CD4-positive, alpha-beta T cell (primary cell): ENCODE measurements at regions of chr10 and their contacts with region 1.

Region 1: GRCh38 chr10:89307269-89307577 is 5.4 kb downstream of the IFIT2 start:
- DNase-seq: no peak
- ATAC-seq: no peak
- H3K4me3 ChIP-seq: no peak overlapping the region
- H3K4me3 Mint-ChIP-seq: no peak overlapping the region
- H3K27ac ChIP-seq: no peak overlapping the region
- H3K27ac Mint-ChIP-seq: no peak overlapping the region
- H3K4me1 ChIP-seq: peaks cover 15% of the 10 kb centered on the region
- H3K4me1 Mint-ChIP-seq: peaks cover 25% of the 10 kb centered on the region
- H3K27me3 ChIP-seq: no peaks in the 10 kb centered on the region
- H3K27me3 Mint-ChIP-seq: no peaks in the 10 kb centered on the region
- CTCF ChIP-seq: no peak

Region 2: DNA sequence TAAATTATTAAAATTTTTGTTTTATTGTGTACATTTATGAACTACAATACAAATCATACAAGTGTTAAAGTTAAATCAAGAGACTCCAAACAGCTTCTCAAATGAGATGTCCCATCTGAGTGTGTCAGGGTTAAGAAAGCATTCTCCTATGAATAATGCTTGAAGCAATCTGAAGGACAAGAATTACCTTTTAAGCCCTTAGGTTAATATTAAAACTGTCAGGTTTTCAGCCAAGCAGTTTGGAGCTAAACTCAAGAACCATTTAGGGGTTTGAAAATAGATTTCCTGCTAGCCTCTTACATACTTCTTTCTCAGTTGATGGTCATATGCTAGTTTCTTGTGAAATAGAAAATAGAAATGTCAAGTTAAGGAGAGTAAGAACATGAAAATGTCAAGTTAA is 682.4 kb before region 1 on chr10:
- CTCF ChIA-PET with region 1: no interaction called
- POLR2A ChIA-PET with region 1: no interaction called
- intact Hi-C with region 1: no loop called
- DNase-seq: no peak
- ATAC-seq: no peak
- H3K4me3 ChIP-seq: no peak overlapping the region
- H3K4me3 Mint-ChIP-seq: no peak overlapping the region
- H3K27ac ChIP-seq: no peak overlapping the region
- H3K27ac Mint-ChIP-seq: no peak overlapping the region
- H3K4me1 ChIP-seq: no peaks in the 10 kb centered on the region
- H3K4me1 Mint-ChIP-seq: no peaks in the 10 kb centered on the region
- H3K27me3 ChIP-seq: no peaks in the 10 kb centered on the region
- H3K27me3 Mint-ChIP-seq: no peaks in the 10 kb centered on the region
- CTCF ChIP-seq: no peak

Region 3: DNA sequence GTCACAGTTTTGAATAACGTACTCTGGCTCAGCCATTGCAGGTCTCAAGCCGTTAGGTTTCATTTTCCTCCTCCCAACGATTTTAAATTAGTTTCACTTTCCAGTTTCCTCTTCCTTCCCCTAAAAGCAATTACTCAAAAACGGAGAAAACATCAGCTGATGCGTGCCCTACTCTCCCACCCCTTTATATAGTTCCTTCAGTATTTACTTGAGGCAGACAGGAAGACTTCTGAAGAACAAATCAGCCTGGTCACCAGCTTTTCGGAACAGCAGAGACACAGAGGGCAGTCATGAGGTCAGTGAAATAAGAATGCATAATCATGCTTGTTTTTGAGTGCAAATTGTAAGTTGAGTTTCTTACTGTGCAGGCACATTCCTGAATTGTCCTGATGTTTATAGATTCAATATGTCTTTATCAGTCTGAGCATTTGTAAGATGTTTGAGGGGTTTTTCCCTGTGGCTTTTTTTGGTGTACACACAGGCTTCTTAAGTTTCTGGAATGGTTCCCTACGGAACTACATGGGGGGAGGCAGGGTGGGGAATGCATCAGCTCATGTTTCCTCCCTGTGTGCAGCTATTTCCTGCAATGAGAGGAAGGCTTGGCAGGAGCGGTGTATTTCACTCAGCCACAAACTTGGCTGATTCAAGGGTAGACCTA is 20.7 kb after region 1 on chr10 and contains the start of gene IFIT3:
- CTCF ChIA-PET with region 1: no interaction called
- POLR2A ChIA-PET with region 1: interaction called, 25 read pairs
- intact Hi-C with region 1: loop called in 1 of 2 experiments (anchors 2 kb)
- DNase-seq: peak in 5 of 14 experiments; percentile 28 to 69 (median 62)
- ATAC-seq: peak; percentile 43
- H3K4me3 ChIP-seq: peak within 1 kb of the TSS; percentile 62
- H3K4me3 Mint-ChIP-seq: peak within 1 kb of the TSS; percentile 86
- H3K27ac ChIP-seq: peak within 1 kb of the TSS; percentile 30 to 32
- H3K27ac Mint-ChIP-seq: peak within 1 kb of the TSS; percentile 63
- H3K4me1 ChIP-seq: peaks cover 45% of the 10 kb centered on the region
- H3K4me1 Mint-ChIP-seq: peaks cover 46% of the 10 kb centered on the region
- H3K27me3 ChIP-seq: no peaks in the 10 kb centered on the region
- H3K27me3 Mint-ChIP-seq: no peaks in the 10 kb centered on the region
- CTCF ChIP-seq: no peak
- total RNA-seq, gene IFIT3: 11.5 to 12.8 TPM